Endothelial cell of umbilical vein (primary cell): ENCODE measurements at regions of chr20 and their contacts with region 1.

Region 1: GRCh38 chr20:36591854-36592641 is 13.5 kb upstream of the RAB5IF start:
- DNase-seq: no peak
- H3K4me3 ChIP-seq: no peak overlapping the region
- H3K27ac ChIP-seq: no peak overlapping the region
- H3K4me1 ChIP-seq: no peaks in the 10 kb centered on the region
- H3K27me3 ChIP-seq: no peaks in the 10 kb centered on the region
- CTCF ChIP-seq: no peak
- POLR2A ChIP-seq: no peak

Region 2: DNA sequence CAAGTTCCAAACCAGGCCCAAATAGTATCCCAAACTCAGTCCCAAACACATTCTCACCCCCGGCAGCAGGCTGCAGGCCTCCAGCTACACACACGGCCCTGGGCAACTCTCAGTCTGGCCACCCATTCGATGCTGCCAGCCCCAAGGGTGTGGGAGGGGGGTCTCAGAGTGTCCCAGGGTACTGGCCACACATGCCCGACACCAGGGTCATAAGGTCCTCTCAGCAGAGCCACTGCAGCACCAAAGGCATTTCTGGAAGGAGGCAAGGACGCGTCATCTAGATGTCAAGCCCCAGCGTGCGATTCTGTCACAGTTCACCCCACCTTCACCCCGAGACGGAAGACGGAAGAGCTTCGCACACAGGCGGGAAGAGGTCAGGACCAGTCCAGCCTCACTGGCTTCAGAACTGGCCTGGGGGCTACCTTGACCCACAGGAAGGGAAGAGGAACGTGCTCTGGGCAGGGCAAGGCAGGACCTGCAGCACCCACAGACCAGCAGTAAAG is 41.2 kb before region 1 on chr20:
- CTCF ChIA-PET with region 1: interaction called, 3 read pairs
- POLR2A ChIA-PET with region 1: no interaction called
- dilution Hi-C with region 1: no loop called
- intact Hi-C with region 1: loop called (anchors 1 kb)
- DNase-seq: no peak
- H3K4me3 ChIP-seq: no peak overlapping the region
- H3K27ac ChIP-seq: no peak overlapping the region
- H3K4me1 ChIP-seq: no peaks in the 10 kb centered on the region
- H3K27me3 ChIP-seq: no peaks in the 10 kb centered on the region
- CTCF ChIP-seq: no peak
- POLR2A ChIP-seq: no peak